Activated CD8-positive, alpha-beta T cell treated with anti-CD3 and anti-CD28 coated beads, Interleukin-2, amount 10 ng/mL, durations not matched to agents 7 days and 5 days (primary cell): ENCODE measurements at regions of chr18 and their contacts with region 1.

Region 1: DNA sequence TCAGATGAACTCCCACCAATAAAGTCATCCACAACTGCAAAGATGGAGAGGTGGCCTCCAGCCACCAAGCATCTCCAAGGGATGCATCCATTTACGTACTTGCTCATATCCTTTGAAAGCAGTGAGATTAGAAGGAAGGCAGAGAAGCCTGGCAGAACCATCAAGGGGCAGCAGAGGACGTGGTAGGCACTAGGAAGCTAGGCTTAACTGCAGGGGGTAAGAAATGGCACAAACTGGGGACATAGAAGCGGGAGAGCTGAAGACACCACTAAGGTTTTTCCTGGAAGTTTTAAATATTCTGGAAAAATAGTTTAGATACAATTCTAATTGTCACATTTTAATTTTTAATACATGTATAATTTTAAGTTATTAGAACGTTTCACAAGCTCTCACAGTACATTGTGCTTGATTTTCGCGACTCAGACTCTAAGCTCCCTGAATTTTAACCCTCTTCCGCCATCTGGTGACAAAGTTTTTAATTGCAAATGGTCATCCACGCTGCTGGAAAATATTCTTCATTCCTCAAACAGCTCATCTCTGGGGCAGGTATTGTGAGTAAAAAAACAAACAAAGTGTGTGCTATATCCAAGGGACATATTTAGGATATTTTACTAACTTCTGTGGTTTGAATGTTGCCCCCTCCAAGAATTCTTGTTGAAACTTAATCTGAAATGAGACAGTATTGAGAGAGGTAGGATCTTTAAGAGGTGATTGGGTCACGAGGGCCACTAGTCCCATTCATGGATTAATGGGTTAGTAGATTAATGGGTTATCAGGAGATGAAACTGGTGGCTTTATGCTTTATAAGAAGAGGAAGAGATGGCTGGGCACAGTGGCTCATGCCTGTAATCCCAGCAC is 1.6 kb upstream of the PSTPIP2 start:
- DNase-seq: peak; percentile 75
- ATAC-seq: peak; percentile 45
- H3K4me3 Mint-ChIP-seq: no peak overlapping the region
- H3K27ac Mint-ChIP-seq: no peak overlapping the region
- H3K4me1 Mint-ChIP-seq: peaks cover 32% of the 10 kb centered on the region
- H3K27me3 Mint-ChIP-seq: no peaks in the 10 kb centered on the region

Region 2: GRCh38 chr18:45879681-45880655 is 193.7 kb before region 1 on chr18:
- CTCF ChIA-PET with region 1: interaction called, 16 read pairs
- POLR2A ChIA-PET with region 1: no interaction called
- DNase-seq: peak; percentile 76
- ATAC-seq: peak; percentile 91
- H3K4me3 Mint-ChIP-seq: no peak overlapping the region
- H3K27ac Mint-ChIP-seq: peak overlapping the region; percentile 55
- H3K4me1 Mint-ChIP-seq: peaks cover 14% of the 10 kb centered on the region
- H3K27me3 Mint-ChIP-seq: no peaks in the 10 kb centered on the region

Region 3: GRCh38 chr18:45930963-45931362 is 142.7 kb before region 1 on chr18:
- CTCF ChIA-PET with region 1: interaction called, 13 read pairs
- POLR2A ChIA-PET with region 1: no interaction called
- DNase-seq: no peak
- ATAC-seq: no peak
- H3K4me3 Mint-ChIP-seq: no peak overlapping the region
- H3K27ac Mint-ChIP-seq: no peak overlapping the region
- H3K4me1 Mint-ChIP-seq: no peaks in the 10 kb centered on the region
- H3K27me3 Mint-ChIP-seq: no peaks in the 10 kb centered on the region

Region 4: DNA sequence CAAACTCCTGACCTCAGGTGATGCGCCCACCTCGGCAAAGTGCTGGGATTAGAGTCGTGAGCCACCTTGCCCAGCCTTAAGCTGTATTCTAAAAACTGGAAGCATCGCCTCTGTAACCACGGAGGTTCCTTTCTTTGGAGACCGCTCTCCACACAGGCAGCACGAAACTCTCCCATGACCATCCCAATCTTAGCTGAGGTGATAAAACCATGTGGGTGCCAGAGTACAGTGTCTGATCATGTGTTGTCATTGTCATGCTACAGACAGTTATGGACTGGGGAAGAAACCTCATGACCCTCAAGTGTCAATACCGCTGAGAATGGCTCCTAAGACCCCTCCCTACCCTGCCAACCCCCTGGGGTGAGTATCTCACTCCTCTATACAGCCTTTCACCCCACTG is 65.2 kb before region 1 on chr18:
- CTCF ChIA-PET with region 1: interaction called, 15 read pairs
- POLR2A ChIA-PET with region 1: no interaction called
- DNase-seq: no peak
- ATAC-seq: no peak
- H3K4me3 Mint-ChIP-seq: no peak overlapping the region
- H3K27ac Mint-ChIP-seq: no peak overlapping the region
- H3K4me1 Mint-ChIP-seq: peaks cover 5% of the 10 kb centered on the region
- H3K27me3 Mint-ChIP-seq: no peaks in the 10 kb centered on the region

Region 5: DNA sequence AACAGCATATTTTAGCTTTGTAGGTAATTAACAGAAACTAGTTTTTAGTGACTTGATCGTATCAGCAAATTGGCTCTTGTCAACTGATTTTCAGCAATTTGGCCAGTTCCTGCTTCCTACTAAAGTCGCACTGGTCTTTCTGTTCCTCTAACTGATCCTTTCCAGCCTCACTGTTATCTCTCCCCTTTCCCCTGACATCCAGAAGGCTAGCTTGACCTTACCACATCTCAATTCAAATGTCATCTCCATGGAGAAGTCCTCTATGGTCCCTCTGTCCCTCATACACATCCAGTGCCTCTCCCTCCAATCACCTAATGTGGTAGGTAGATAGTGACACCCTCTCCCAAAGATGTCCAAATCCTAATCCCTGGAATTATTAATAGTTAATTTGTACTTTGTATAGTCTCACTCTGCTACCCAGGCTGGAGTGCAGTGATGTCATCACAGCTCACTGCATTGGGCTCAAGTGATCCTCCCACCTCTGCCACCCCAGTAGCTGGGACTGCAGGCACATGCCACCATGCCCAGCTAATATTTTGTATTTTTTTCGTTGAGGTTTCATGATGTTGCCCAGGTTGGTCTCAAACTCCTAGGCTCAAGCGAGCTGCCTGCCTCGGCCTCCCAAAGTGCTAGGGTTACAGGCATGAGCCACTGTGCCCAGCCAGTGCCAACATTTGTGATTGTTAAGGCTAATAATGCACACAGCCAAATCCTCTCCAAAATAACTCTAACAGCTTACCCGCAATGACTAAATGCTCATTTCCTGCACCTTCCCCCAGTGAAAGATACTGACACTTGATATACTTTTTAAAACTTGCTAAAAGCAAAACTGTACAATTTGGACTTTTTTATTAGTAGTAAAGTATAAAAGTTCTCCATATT is 18.5 kb before region 1 on chr18:
- CTCF ChIA-PET with region 1: interaction called, 26 read pairs
- POLR2A ChIA-PET with region 1: interaction called, 3 read pairs
- DNase-seq: no peak
- ATAC-seq: peak; percentile 79
- H3K4me3 Mint-ChIP-seq: peak overlapping the region; percentile 49
- H3K27ac Mint-ChIP-seq: peak overlapping the region; percentile 76
- H3K4me1 Mint-ChIP-seq: peaks cover 31% of the 10 kb centered on the region
- H3K27me3 Mint-ChIP-seq: no peaks in the 10 kb centered on the region